Thyroid gland (tissue), 4 donors: ENCODE measurements at regions of chr11 and their contacts with region 1.

Region 1: DNA sequence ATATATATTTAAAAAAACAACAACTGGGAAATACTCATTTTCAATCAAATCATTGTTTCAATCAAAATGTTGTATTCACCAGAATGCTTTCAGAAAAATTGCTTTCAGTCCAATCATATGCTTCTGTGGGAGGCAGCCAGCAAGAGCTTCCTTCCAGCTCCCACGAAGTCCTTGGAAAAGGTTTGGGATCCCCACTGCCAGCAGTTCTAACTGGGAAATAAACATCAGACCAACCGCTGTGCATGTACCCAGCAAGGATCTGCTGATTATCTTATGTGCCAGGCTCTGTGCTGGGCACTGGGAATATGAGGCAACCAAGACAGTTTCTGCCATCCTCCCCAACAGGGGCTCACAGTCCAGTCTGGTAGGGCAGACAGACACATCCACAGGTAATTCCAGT is 10.8 kb downstream of the RPS13 start:
- DNase-seq: no peak
- H3K4me3 ChIP-seq: no peak overlapping the region
- H3K27ac ChIP-seq: no peak overlapping the region
- H3K4me1 ChIP-seq: no peaks in the 10 kb centered on the region
- H3K27me3 ChIP-seq: no peaks in the 10 kb centered on the region
- CTCF ChIP-seq: no peak
- POLR2A ChIP-seq: no peak

Region 2: DNA sequence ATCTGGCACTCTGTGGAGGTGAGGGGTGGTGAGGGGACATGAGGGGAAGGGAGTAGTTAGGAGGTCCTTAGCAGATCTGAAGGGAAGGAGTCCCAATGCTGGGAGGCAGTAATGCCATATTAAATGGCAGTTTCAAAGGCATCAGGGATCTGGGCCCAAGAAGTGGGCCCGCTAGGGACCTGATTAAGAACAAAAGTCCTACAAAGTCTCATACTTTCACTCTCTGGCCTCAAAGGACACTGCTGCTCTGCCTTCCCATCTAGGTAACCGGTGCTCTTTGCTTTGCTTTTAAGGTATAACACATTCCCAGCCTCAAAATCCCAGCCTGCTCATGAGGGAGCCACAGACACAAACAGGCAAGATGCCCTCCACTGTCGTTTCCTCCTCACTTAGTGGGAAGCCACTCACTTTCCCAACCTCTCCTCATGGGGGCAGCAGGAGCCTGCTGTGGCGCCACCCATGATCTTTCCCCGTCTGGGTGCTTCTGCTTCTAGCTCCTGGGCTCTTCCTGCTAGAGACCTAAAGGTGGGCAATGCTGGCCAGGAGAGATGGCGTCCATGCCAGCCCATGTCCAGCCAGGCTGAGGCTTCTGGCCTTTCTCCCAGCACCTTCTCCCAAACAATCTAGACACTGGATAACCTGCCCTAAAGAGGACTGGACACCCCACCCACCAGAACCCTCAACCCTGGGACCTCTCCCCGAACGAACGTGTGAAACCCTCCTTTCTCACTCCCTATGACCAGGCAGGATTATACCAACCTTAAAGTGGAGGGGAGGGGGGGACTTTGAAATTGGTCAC is 120.8 kb before region 1 on chr11:
- intact Hi-C with region 1: loop called (anchors 5 kb)
- DNase-seq: peak; percentile 77 to 79
- H3K4me3 ChIP-seq: no peak overlapping the region
- H3K27ac ChIP-seq: peak overlapping the region; percentile 32 to 71 (median 47)
- H3K4me1 ChIP-seq: peaks cover 6 to 11% of the 10 kb centered on the region in 2 donors
- H3K27me3 ChIP-seq: no peaks in the 10 kb centered on the region
- CTCF ChIP-seq: peak; percentile 36 to 90 (median 84)
- POLR2A ChIP-seq: no peak